Esophagus muscularis mucosa (tissue), 4 donors: ENCODE measurements at regions of chr21 and their contacts with region 1.

Region 1: DNA sequence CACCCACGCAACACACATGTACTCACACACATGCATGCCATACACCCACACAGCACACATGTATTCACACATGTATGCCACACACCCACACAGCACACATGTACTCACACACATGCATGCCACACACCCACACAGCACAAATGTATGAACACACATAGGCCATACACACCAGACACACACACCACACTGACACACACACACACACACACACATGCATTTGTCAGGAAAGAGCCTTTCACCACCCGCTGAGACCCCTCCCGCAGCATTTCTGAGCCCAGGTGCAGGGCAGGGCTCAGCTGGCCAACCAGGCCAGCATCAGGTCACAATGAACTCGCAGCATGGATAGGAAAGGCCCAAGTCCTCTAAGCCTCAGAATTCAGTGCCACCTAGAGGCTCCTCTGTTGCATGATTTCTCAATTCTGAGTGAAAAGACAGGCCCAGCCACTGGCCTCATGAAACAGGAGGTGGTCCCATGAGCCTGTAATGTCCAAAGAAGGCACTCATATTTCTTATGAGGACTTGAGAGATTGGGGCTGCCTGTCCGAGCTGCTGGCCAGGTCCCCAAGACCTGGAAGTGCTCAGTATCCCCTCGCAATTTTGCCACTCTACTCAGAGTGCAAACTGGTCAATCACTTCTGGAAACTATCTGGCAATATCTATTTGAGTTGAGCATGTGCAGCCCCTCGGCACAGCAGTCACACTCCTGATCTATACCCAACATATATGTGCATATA is 57.3 kb downstream of the PSMG1 start:
- DNase-seq: no peak
- H3K4me3 ChIP-seq: no peak overlapping the region
- H3K27ac ChIP-seq: no peak overlapping the region
- H3K4me1 ChIP-seq: peaks cover 0 to 8% (median 5%) of the 10 kb centered on the region in 4 donors
- H3K27me3 ChIP-seq: no peaks in the 10 kb centered on the region
- CTCF ChIP-seq: peak; percentile 52 to 66 (median 66)
- EP300 ChIP-seq: no peak
- POLR2A ChIP-seq: no peak

Region 2: DNA sequence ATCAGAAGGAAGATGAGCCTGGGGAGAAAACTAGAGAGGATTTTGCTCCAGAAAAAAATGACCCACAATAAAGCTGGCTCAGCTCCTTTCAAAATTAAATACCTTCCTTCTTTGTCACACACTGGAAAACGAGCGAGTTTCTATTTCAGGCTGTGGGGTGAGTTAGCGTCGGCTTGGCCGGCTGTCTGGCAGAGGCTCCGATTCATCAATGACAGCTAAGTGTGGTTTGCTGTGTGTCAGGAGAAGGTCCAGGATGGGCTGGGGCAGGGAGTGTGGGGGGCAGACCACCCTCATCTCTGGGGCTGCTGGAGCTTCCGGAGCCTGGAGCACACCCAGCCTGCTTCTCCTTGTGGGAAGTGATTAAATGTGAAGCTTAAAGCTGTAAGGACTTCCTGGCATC is 200.0 kb before region 1 on chr21:
- intact Hi-C with region 1: loop called (anchors 5 kb)
- DNase-seq: peak; percentile 93
- H3K4me3 ChIP-seq: peak overlapping the region; percentile 38 to 47 (median 41)
- H3K27ac ChIP-seq: peak overlapping the region; percentile 79 to 87 (median 85)
- H3K4me1 ChIP-seq: peaks cover 21 to 31% (median 29%) of the 10 kb centered on the region in 4 donors
- H3K27me3 ChIP-seq: no peaks in the 10 kb centered on the region
- CTCF ChIP-seq: no peak
- EP300 ChIP-seq: peak; percentile 45
- POLR2A ChIP-seq: no peak

Region 3: DNA sequence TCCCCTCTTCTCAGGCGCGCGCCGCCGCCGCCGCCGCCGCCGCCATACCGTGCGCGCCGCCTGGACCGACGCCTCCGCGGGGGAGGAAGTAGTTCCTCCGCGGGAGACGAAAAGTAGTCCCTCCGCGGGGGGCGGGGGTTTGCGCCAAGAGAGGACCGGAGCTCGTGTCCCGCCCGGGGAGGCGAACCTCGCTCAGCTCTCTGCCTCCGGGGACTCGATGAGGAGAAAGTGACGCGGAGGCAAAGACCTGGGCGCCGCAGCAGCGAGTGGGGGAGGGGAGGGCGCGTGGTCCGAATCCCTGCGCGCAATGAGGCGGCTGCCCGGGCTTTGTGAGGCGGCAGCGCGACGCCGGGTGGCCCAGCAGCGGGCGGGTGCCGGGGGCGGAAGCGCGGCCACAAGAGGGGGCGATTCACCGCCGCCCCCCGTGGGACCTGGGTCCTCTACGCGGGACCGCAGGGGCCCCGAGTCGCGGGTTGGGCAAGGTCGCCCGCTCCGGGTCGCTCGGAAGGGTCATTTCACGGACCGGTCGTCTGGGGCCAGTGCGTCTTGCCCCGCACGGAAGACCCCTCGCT is 187.7 kb after region 1 on chr21 and contains the start of gene BRWD1:
- intact Hi-C with region 1: no loop called
- DNase-seq: peak; percentile 94
- H3K4me3 ChIP-seq: peak within 1 kb of the TSS; percentile 83 to 96 (median 89)
- H3K27ac ChIP-seq: peak within 1 kb of the TSS; percentile 96 to 99 (median 98)
- H3K4me1 ChIP-seq: peaks cover 23 to 68% (median 55%) of the 10 kb centered on the region in 4 donors
- H3K27me3 ChIP-seq: no peaks in the 10 kb centered on the region
- CTCF ChIP-seq: peak; percentile 46 to 52 (median 49)
- EP300 ChIP-seq: no peak
- POLR2A ChIP-seq: peak; percentile 53
- total RNA-seq, gene BRWD1: 55.0 to 104 (median 67.9) TPM